ENCODE measurements at regions of chr3 and their contacts with region 1.

Region 1: DNA sequence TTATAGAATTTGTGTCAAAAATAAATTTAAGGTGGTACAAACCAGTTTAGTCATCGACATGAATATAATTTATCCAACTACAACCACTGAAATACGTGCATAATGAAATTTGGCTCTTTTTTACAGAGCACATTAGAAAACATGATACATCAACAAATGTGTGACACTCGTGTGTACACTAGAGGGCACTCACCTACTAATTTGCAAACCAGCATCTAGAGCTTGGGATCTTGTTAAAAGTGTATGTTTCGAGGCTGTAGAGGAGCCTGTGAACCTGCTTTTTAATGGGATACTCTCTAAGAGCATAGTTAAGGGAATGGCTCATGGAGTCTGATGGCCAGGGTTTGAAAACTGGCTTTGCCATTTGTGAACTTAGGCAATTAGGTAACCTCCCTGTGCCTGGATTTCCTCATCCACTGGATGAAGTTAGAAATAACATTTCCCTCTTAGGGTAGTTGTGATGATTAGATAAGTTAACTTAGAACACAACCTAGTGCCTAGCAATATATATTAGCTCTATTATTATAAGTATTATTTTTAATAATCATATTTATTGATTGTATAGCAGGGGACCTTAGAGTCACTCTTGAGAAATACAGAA is 8.8 kb upstream of the CPOX start:
- DNase-seq: no peak
- H3K4me3 Mint-ChIP-seq: no peak overlapping the region
- H3K27ac Mint-ChIP-seq: no peak overlapping the region
- H3K4me1 Mint-ChIP-seq: no peaks in the 10 kb centered on the region
- H3K27me3 Mint-ChIP-seq: peaks cover 9% of the 10 kb centered on the region

Region 2: GRCh38 chr3:98612587-98612986 is 10.4 kb after region 1 on chr3:
- CTCF ChIA-PET with region 1: interaction called, 14 read pairs
- POLR2A ChIA-PET with region 1: no interaction called
- intact Hi-C with region 1: no loop called
- DNase-seq: no peak
- H3K4me3 Mint-ChIP-seq: no peak overlapping the region
- H3K27ac Mint-ChIP-seq: no peak overlapping the region
- H3K4me1 Mint-ChIP-seq: no peaks in the 10 kb centered on the region
- H3K27me3 Mint-ChIP-seq: peaks cover 8% of the 10 kb centered on the region

Region 3: DNA sequence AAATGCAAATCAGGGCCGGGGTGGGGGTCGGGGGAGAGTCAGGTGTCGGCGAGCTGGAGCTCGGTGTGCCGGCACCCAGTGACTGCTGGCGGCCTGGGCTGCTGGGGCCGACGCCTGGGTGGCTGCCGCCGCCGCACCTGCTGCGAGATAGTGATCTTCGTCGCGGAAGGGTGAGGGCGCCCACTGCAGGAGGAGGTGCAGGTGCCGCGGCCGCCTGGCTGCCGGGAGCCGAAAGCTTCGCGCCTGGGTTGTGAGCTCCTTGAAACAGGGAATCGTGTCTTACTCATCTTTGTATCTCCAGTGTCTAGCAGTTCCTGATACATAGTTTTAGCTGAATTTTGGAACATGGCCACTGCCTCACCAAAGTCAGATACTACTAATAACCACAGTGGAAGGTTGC is 55.3 kb after region 1 on chr3:
- CTCF ChIA-PET with region 1: interaction called, 16 read pairs
- POLR2A ChIA-PET with region 1: no interaction called
- intact Hi-C with region 1: loop called (anchors 1 kb)
- DNase-seq: peak; percentile 60
- H3K4me3 Mint-ChIP-seq: no peak overlapping the region
- H3K27ac Mint-ChIP-seq: no peak overlapping the region
- H3K4me1 Mint-ChIP-seq: peaks cover 3% of the 10 kb centered on the region
- H3K27me3 Mint-ChIP-seq: peaks cover 16% of the 10 kb centered on the region